Colonic mucosa (tissue), 4 donors: ENCODE measurements at regions of chr7 and their contacts with region 1.

Region 1: GRCh38 chr7:95686109-95686508 is 86.2 kb upstream of the DYNC1I1 start:
- DNase-seq: peak; percentile 41
- H3K4me3 ChIP-seq: no peak overlapping the region
- H3K27ac ChIP-seq: no peak overlapping the region
- H3K4me1 ChIP-seq: no peaks in the 10 kb centered on the region
- H3K27me3 ChIP-seq: no peaks in the 10 kb centered on the region
- CTCF ChIP-seq: peak; percentile 35

Region 2: DNA sequence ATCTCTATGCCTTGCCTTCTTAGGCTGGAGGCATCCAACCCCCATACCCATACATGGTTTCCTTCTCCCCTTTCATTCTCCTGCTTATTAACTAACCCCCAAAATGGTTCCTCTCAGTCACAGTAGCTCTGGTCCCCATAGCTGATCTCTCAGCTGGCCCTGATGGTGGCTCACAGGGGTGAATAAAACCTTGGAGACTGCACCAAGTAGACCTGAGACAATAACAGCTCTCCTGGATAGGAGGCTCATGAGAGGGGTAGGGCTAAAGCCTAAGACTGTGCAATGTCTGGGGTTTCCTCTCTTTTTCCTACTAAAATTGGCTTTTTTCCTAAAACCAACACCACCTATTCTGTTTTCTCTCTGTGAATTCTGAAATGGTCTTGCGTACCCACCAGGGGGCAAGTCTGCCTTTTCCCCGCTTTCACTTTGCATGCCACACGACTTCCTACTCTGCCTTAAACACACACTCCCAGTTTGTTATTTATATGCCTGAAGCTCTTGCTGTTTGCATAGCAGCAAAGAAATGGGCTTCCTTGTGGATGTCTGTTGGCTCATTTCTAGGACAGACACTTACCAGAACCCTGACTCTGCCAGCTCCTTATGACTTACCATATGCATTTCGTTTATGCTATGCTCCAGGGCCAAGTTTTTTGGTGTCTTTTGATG is 343.3 kb before region 1 on chr7:
- intact Hi-C with region 1: no loop called
- DNase-seq: no peak
- H3K4me3 ChIP-seq: no peak overlapping the region
- H3K27ac ChIP-seq: no peak overlapping the region
- H3K4me1 ChIP-seq: no peaks in the 10 kb centered on the region
- H3K27me3 ChIP-seq: no peaks in the 10 kb centered on the region
- CTCF ChIP-seq: no peak

Region 3: DNA sequence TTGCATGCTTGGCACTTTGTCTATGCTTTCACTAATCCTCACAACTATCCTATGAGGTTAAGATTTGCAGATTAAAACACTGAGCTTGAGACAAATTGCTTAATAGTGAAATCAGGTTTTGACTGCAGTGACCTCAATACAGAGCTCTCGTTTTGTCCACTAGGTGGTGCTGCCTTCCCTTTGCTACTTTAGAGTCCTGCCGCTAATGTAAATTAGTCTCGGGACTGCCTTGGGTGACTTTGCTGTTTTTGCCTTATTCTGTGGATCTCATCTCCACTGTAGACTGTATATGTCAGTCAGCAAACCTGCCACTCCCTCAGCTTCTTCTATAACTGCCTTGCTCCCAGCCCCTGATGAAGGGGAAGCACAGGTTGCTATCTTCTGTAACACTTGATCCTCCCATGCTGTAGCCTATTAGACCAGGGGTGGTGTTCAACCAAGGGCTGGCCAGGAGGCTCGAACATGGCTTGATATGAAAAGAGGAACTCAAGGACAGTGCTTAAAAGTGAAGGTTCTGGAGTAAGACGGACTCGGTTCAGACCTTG is 174.3 kb before region 1 on chr7:
- intact Hi-C with region 1: loop called (anchors 5 kb)
- DNase-seq: peak; percentile 73
- H3K4me3 ChIP-seq: no peak overlapping the region
- H3K27ac ChIP-seq: no peak overlapping the region
- H3K4me1 ChIP-seq: no peaks in the 10 kb centered on the region
- H3K27me3 ChIP-seq: no peaks in the 10 kb centered on the region
- CTCF ChIP-seq: peak; percentile 88

Region 4: GRCh38 chr7:95527033-95527775 is 158.9 kb before region 1 on chr7:
- intact Hi-C with region 1: loop called (anchors 2 kb)
- DNase-seq: peak; percentile 64
- H3K4me3 ChIP-seq: no peak overlapping the region
- H3K27ac ChIP-seq: no peak overlapping the region
- H3K4me1 ChIP-seq: no peaks in the 10 kb centered on the region
- H3K27me3 ChIP-seq: no peaks in the 10 kb centered on the region
- CTCF ChIP-seq: peak; percentile 78